Activated CD8-positive, alpha-beta memory T cell treated with anti-CD3 and anti-CD28 coated beads, Interleukin-2, amount 10 ng/mL, durations not matched to agents 7 days and 5 days (primary cell): ENCODE measurements at regions of chr3 and their contacts with region 1.

Region 1: GRCh38 chr3:52056968-52057805 is 816 bp upstream of the DUSP7 start:
- DNase-seq: peak; percentile 100
- ATAC-seq: peak; percentile 81
- H3K4me3 Mint-ChIP-seq: peak overlapping the region; percentile 84
- H3K27ac Mint-ChIP-seq: peak overlapping the region; percentile 89
- H3K4me1 Mint-ChIP-seq: peaks cover 30% of the 10 kb centered on the region
- H3K27me3 Mint-ChIP-seq: no peaks in the 10 kb centered on the region

Region 2: DNA sequence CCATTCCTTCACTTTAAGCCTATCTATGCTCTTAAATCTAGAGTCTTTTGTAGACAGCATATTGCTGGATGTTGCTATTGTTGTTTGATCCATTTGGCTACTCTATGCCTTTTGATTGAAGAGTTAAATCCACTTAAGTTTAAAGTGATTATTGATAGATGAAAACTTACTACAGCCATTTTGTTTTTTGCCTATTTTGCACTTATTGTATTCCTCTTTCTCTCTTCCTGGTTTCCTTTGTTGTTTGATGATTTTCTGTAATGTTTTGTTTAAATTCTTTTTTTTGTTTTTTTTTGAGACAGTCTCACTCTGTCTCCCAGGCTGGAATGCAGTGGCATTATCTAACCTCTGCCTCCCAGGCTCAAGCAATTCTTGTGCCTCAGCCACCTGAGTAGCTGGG is 298.0 kb before region 1 on chr3:
- CTCF ChIA-PET with region 1: no interaction called
- DNase-seq: no peak
- ATAC-seq: no peak
- H3K4me3 Mint-ChIP-seq: no peak overlapping the region
- H3K27ac Mint-ChIP-seq: no peak overlapping the region
- H3K4me1 Mint-ChIP-seq: no peaks in the 10 kb centered on the region
- H3K27me3 Mint-ChIP-seq: peaks cover 43% of the 10 kb centered on the region

Region 3: DNA sequence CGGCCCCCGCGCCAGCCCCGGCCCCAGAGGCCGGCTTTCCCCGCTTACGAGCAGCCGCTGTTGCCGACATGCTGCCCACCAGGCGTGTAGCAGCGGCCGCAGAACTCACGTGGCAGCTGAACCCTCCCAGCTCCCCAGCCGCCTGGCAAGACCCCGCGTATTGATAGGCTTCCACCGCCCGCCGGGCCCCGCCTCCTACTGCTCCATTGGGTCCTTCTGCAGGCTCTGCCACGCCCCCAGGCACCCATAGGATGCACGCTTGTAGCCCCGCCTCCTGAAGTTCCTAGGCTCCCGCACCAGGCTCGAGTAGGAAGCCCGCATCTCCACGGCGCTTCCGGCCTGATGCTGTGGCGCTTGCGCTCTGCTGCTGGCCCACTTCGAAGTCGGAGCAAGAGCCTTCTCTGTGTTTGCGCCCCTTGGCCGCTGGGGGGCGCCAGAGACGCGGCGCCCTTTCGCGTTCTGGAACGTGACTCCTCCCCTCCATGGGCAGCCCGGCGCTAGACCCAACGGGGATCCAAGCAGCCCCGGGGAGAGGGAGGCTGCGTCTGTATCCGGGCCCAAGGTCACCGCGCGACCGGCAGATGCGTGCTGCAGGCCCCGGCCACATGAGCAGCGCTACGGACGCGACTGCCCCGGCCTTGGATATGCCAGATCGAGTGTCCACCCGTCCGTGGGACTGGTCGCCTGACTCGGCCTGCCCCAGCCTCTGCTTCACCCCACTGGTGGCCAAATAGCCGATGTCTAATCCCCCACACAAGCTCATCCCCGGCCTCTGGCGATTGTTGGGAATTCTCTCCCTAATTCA is 115.2 kb before region 1 on chr3 and contains the starts of genes PARP3 and RRP9:
- CTCF ChIA-PET with region 1: interaction called, 18 read pairs
- DNase-seq: peak; percentile 100
- ATAC-seq: peak; percentile 94
- H3K4me3 Mint-ChIP-seq: peak within 1 kb of the TSS; percentile 80
- H3K27ac Mint-ChIP-seq: peak within 1 kb of the TSS; percentile 88
- H3K4me1 Mint-ChIP-seq: peaks cover 46% of the 10 kb centered on the region
- H3K27me3 Mint-ChIP-seq: no peaks in the 10 kb centered on the region
- total RNA-seq, gene PARP3: 15.8 to 19.0 TPM
- total RNA-seq, gene RRP9: 25.4 to 38.0 TPM

Region 4: DNA sequence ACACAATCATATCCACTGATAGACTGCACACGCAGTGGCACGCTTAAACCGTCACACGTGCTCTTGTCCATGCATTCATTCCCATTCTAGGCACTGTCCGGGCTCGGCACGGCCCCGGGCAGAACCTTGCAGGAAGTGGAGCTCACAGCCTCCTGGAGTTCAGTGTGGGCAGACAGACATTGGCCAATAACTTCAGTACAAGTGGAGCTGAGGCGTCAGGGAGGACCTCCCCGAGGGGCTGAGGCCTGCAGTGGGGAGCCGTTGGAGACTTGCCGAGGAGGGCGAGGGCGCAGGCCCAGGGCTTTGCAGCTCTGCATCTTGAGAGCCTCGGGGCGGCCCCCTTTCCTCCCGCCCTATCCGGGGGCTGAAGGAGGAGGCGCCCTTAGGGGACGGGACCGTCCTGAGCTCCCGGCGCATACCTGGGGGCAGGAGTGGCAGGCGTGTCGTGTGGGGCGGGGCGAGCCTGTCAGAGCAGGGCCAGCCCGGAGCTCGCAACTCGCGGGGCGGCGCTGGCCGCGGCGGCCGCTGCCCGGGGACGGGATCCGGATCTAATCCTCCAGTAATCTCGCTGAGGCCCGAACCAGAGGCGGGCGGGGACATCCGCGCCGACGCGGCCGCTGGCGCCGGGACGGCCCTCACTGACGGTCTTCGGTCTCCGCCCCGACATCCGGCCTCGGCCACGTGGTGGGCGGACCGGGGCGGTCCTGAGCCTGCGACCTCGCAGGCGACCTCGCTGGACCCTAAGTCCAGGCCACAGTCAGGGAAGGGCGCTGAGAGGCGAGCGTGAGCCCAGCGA is 74.2 kb before region 1 on chr3 and contains the start of gene ACY1:
- CTCF ChIA-PET with region 1: interaction called, 12 read pairs
- DNase-seq: peak; percentile 83
- ATAC-seq: peak; percentile 85
- H3K4me3 Mint-ChIP-seq: peak within 1 kb of the TSS; percentile 98
- H3K27ac Mint-ChIP-seq: peak within 1 kb of the TSS; percentile 88
- H3K4me1 Mint-ChIP-seq: peaks cover 29% of the 10 kb centered on the region
- H3K27me3 Mint-ChIP-seq: no peaks in the 10 kb centered on the region
- total RNA-seq, gene ACY1: 18.1 to 21.3 TPM

Region 5: GRCh38 chr3:52014613-52015012 is 42.6 kb before region 1 on chr3:
- CTCF ChIA-PET with region 1: interaction called, 10 read pairs
- DNase-seq: no peak
- ATAC-seq: no peak
- H3K4me3 Mint-ChIP-seq: no peak overlapping the region
- H3K27ac Mint-ChIP-seq: no peak overlapping the region
- H3K4me1 Mint-ChIP-seq: no peaks in the 10 kb centered on the region
- H3K27me3 Mint-ChIP-seq: no peaks in the 10 kb centered on the region

Region 6: DNA sequence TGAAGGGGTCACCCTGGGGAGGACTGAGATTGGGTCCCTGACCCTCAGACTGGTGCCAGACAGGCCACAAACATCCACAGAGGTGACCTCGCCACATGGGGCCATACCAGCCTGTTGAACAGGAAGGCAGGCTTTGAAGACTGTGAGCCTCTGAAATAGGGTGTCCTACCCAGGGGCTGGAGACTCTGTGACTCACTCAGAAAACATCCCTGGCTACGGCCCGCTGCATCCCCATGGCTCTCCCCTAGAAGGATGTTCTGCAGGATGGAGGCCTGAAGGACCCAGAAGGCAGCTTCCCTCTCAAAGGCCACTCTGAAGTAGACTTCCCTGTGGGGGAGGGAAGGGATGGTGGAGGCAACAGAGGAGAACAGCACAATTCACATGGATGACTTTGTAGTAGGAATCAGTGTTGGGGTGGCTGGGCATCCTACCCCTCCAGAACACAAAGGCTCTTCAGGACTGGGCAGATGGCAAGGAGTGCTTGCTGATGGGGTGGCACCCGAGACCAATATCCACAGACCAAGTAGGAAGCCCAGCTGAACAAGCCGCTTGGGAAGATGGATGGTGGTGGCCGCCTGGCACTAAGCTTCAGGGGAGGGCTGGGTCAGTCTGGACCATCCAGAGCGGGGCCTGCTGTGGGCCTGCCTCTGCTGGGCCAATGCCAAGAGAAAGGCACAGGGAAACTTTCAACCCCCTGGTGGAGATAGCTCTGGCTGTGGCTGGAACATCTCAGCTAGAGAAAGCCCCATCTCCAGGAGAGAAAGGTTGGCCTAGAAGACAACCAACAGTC is 36.8 kb after region 1 on chr3:
- CTCF ChIA-PET with region 1: no interaction called
- DNase-seq: no peak
- ATAC-seq: no peak
- H3K4me3 Mint-ChIP-seq: no peak overlapping the region
- H3K27ac Mint-ChIP-seq: no peak overlapping the region
- H3K4me1 Mint-ChIP-seq: no peaks in the 10 kb centered on the region
- H3K27me3 Mint-ChIP-seq: no peaks in the 10 kb centered on the region

Region 7: DNA sequence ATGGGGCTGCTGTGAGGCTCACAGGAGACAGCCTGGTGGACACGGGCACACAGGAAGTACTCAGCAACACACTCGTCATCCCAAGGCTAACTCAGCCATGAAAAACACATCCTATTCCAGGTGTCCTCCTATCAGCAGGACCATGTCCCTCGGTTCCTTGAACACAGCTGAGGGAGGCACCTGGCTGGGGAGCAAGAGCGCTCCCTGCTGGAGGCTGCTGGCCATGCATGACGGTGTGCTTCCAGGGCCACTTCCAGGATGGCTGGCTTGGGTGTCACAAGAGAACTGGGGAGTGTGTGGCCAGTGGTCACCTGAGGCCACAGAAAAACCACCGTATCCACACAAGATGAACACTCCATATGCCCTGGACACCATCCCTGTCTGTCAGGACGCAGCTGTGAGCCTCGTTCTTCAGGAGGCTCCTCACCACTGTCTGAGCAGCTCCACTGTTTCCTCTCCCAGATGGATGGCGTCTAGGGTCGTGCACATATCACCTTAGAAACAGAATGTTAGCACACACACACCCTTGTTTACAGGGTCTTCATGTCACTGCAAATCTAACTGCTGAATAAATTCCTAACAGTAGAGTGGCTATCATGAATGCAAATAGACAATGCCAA is 66.0 kb after region 1 on chr3:
- CTCF ChIA-PET with region 1: interaction called, 66 read pairs
- DNase-seq: peak; percentile 74
- ATAC-seq: peak; percentile 80
- H3K4me3 Mint-ChIP-seq: no peak overlapping the region
- H3K27ac Mint-ChIP-seq: peak overlapping the region; percentile 13
- H3K4me1 Mint-ChIP-seq: peaks cover 16% of the 10 kb centered on the region
- H3K27me3 Mint-ChIP-seq: no peaks in the 10 kb centered on the region

Region 8: GRCh38 chr3:52144034-52144795 is 87.0 kb after region 1 on chr3:
- CTCF ChIA-PET with region 1: interaction called, 19 read pairs
- DNase-seq: peak; percentile 91
- ATAC-seq: peak; percentile 94
- H3K4me3 Mint-ChIP-seq: no peak overlapping the region
- H3K27ac Mint-ChIP-seq: peak overlapping the region; percentile 59
- H3K4me1 Mint-ChIP-seq: peaks cover 11% of the 10 kb centered on the region
- H3K27me3 Mint-ChIP-seq: no peaks in the 10 kb centered on the region

Region 9: DNA sequence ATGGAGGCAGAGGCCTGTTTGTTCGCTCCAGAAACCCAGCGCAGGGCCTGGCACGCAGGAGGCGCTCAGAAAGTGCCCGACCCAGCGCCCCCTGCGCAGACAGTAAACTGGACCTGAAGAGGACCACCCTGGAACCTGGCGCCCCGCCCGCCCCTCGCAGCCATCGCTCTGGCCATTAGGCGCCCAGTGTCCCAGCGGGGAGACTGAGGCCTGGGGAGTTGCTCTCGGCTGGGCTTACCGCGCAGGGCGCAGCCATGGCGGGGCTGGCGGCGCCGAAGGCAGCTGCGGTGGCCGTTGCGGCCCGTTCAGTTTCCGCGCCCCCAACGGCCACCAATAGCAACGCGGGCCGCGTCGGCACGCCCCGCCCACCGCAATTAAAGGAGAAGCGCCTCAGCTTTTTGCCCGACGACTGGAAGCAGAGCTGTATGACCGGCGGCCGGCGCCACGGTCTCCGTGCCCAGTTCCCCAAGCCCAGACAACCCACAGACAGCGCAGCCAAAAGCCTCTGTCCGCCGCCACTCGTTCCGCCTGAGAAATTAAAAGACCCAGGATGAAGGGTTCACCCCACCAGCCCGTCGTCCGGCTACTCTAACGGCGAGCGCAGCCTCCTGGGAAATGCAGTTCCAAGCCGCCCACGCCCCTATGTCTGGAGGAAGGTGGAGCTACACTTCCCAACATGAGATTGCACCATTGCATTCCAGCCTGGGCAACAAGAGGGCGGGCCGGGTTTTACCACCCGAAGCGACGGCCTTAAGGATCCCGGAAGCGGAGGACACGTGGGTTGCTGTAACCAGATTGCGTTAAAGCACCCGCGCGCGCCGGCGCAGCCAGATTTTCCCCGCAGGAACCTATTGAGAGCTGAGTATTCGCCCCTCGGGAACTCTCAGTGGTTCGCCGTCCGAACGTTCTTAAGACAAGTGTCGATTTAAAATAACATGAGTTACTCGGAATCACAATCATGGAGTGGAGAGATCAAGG is 97.2 kb after region 1 on chr3 and contains the start of gene POC1A:
- CTCF ChIA-PET with region 1: interaction called, 13 read pairs
- DNase-seq: peak; percentile 94
- ATAC-seq: peak; percentile 92
- H3K4me3 Mint-ChIP-seq: peak within 1 kb of the TSS; percentile 93
- H3K27ac Mint-ChIP-seq: peak within 1 kb of the TSS; percentile 91
- H3K4me1 Mint-ChIP-seq: peaks cover 20% of the 10 kb centered on the region
- H3K27me3 Mint-ChIP-seq: no peaks in the 10 kb centered on the region
- total RNA-seq, gene POC1A: 29.3 to 29.5 TPM